ENCODE measurements at regions of chr3 and their contacts with region 1.

Region 1: DNA sequence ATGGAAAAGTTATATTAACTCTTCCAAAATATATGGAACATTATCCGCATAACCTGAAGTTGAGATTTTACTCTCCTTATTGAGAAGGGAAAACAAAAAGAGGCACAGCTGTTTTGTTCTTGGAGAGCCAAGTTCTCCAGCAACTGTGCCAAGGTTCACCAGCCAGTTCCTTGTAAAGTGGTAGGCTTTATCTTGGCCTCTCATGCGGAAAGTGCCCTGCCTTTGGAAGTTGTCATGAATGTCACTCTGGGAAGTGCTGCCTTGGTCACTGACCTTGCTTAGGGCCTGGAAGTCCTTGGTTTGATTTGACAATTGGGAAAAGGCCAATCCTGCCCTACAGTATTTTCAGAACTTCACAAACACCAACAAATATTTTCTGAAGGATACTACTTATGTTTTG is 44.2 kb upstream of the THRB start:
- DNase-seq: no peak
- ATAC-seq: no peak
- H3K4me3 ChIP-seq: no peak overlapping the region
- H3K4me3 Mint-ChIP-seq: no peak overlapping the region
- H3K27ac ChIP-seq: no peak overlapping the region
- H3K27ac Mint-ChIP-seq: no peak overlapping the region
- H3K4me1 ChIP-seq: no peaks in the 10 kb centered on the region
- H3K4me1 Mint-ChIP-seq: no peaks in the 10 kb centered on the region
- H3K27me3 ChIP-seq: no peaks in the 10 kb centered on the region
- H3K27me3 Mint-ChIP-seq: no peaks in the 10 kb centered on the region
- CTCF ChIP-seq: no peak

Region 2: DNA sequence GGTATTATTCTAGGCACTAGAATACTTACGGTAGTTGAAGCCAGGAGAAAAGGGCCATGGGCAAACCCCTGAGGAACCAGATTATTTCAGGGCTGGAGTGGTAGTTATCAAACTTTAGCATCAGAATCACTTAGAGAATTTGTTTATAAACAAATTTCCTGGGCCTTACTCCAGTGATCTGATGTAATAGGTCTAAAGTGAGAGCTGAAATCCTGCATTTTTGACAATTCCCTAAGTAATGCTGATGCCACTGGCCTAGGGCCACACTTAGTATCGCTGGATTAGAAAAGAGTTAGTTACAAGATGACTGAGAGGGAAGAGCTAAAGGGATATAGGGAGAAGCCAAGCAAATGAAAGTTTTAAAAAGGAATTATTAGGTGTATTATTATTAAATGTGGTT is 368.2 kb after region 1 on chr3:
- CTCF ChIA-PET with region 1: no interaction called
- POLR2A ChIA-PET with region 1: no interaction called
- intact Hi-C with region 1: loop called in 1 of 2 experiments (anchors 10 kb)
- DNase-seq: no peak
- ATAC-seq: no peak
- H3K4me3 ChIP-seq: no peak overlapping the region
- H3K4me3 Mint-ChIP-seq: no peak overlapping the region
- H3K27ac ChIP-seq: no peak overlapping the region
- H3K27ac Mint-ChIP-seq: no peak overlapping the region
- H3K4me1 ChIP-seq: no peaks in the 10 kb centered on the region
- H3K4me1 Mint-ChIP-seq: no peaks in the 10 kb centered on the region
- H3K27me3 ChIP-seq: no peaks in the 10 kb centered on the region
- H3K27me3 Mint-ChIP-seq: no peaks in the 10 kb centered on the region
- CTCF ChIP-seq: no peak

Measured in CD8-positive, alpha-beta T cell (primary cell).